SK-N-SH (cell line): ENCODE measurements at regions of chr6 and their contacts with region 1.

Region 1: DNA sequence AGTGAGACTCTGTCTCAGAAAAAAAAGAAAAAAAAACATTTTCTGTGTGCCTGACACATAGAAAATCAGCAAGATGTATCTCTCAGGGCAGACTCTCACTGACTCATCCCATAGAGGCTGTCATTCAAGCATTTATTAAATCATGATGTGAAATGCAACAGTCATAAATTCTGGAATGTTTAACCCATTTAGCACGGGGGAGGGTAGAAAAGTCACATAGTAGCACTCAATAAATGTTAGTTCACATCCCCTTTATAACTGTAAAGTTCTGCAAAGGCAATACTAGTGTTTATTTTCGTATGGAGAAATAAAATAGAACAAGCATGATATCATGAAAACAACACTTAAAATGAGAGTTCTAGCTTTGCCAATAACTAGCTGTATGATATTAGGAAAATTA is 15.5 kb upstream of the CARMIL1 start:
- DNase-seq: no peak
- H3K4me3 ChIP-seq: no peak overlapping the region
- H3K27ac ChIP-seq: peak overlapping the region in 1 of 2 experiments; percentile 85; a peak in 2 of 4 replicates
- H3K4me1 ChIP-seq: no peaks in the 10 kb centered on the region
- H3K27me3 ChIP-seq: no peaks in the 10 kb centered on the region
- CTCF ChIP-seq: no peak
- EP300 ChIP-seq: peak in 1 of 2 experiments; percentile 85; a peak in 2 of 4 replicates
- RAD21 ChIP-seq: no peak

Region 2: GRCh38 chr6:25193460-25194171 is 70.0 kb before region 1 on chr6:
- CTCF ChIA-PET with region 1: no interaction called
- POLR2A ChIA-PET with region 1: no interaction called
- DNase-seq: no peak
- H3K4me3 ChIP-seq: peak overlapping the region in 1 of 2 experiments; percentile 47; a peak in 3 of 4 replicates
- H3K27ac ChIP-seq: peak overlapping the region; percentile 95 to 100
- H3K4me1 ChIP-seq: peaks cover 7 to 29% of the 10 kb centered on the region in 2 experiments
- H3K27me3 ChIP-seq: no peaks in the 10 kb centered on the region
- CTCF ChIP-seq: no peak
- EP300 ChIP-seq: peak in 1 of 2 experiments; percentile 83; a peak in 2 of 4 replicates
- RAD21 ChIP-seq: no peak

Region 3: GRCh38 chr6:25223490-25223991 is 40.1 kb before region 1 on chr6:
- CTCF ChIA-PET with region 1: interaction called, 21 read pairs
- POLR2A ChIA-PET with region 1: interaction called, 4 read pairs
- DNase-seq: peak; percentile 64
- H3K4me3 ChIP-seq: peak overlapping the region; percentile 21 to 39
- H3K27ac ChIP-seq: peak overlapping the region in 1 of 2 experiments; percentile 39; a peak in 1 of 4 replicates
- H3K4me1 ChIP-seq: peaks cover 3 to 29% of the 10 kb centered on the region in 2 experiments; a peak in 3 of 4 replicates
- H3K27me3 ChIP-seq: no peaks in the 10 kb centered on the region
- CTCF ChIP-seq: peak; percentile 99
- EP300 ChIP-seq: no peak
- RAD21 ChIP-seq: peak; percentile 95

Region 4: DNA sequence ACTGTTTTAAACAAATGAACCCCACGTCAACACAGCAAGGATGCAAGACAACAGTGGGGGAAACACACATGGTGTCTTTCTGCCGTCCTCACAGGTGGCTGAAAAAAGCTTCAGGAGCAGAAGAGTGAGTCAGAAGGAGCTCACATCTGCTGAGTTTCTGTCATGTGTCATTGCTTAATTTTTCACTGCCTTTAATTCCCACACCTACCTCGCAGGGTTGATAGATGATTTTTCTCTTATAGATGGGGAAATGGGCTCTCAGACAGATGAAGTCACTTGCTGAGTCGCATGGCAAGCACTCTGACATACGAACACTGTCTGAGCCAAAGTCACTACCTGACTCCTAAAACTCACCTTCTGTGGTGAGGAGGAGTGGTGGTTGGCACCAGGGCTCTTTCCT is 12.8 kb before region 1 on chr6:
- CTCF ChIA-PET with region 1: interaction called, 37 read pairs
- POLR2A ChIA-PET with region 1: no interaction called
- DNase-seq: no peak
- H3K4me3 ChIP-seq: no peak overlapping the region
- H3K27ac ChIP-seq: peak overlapping the region in 1 of 2 experiments; percentile 20; a peak in 2 of 4 replicates
- H3K4me1 ChIP-seq: peaks cover 0 to 9% of the 10 kb centered on the region in 2 experiments; a peak in 1 of 4 replicates
- H3K27me3 ChIP-seq: no peaks in the 10 kb centered on the region
- CTCF ChIP-seq: no peak
- EP300 ChIP-seq: no peak; a peak in 1 of 4 replicates
- RAD21 ChIP-seq: no peak

Region 5: DNA sequence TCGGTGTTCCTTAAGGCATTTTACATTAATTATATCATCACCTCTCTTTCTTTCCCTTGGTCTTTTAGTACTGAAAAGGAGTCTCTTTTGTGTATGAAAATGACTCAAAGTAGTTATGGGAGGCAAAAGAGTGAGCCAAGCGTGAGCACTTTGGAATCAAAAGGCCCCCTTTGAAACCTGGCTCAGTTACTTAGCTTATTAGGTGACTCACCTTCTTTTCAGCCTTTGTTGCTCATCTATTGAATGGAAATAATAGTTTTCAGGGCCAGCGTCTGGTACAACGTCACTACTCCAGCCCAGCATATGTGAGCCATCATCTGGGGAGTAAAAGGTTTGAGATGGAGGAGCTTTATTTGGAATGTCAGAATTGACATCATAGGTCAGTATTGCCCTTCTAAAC is 241.0 kb after region 1 on chr6:
- CTCF ChIA-PET with region 1: interaction called, 10 read pairs
- POLR2A ChIA-PET with region 1: no interaction called
- DNase-seq: no peak
- H3K4me3 ChIP-seq: no peak overlapping the region
- H3K27ac ChIP-seq: no peak overlapping the region
- H3K4me1 ChIP-seq: peaks cover 0 to 2% of the 10 kb centered on the region in 2 experiments; a peak in 3 of 4 replicates
- H3K27me3 ChIP-seq: no peaks in the 10 kb centered on the region
- CTCF ChIP-seq: no peak
- EP300 ChIP-seq: no peak
- RAD21 ChIP-seq: no peak

Region 6: DNA sequence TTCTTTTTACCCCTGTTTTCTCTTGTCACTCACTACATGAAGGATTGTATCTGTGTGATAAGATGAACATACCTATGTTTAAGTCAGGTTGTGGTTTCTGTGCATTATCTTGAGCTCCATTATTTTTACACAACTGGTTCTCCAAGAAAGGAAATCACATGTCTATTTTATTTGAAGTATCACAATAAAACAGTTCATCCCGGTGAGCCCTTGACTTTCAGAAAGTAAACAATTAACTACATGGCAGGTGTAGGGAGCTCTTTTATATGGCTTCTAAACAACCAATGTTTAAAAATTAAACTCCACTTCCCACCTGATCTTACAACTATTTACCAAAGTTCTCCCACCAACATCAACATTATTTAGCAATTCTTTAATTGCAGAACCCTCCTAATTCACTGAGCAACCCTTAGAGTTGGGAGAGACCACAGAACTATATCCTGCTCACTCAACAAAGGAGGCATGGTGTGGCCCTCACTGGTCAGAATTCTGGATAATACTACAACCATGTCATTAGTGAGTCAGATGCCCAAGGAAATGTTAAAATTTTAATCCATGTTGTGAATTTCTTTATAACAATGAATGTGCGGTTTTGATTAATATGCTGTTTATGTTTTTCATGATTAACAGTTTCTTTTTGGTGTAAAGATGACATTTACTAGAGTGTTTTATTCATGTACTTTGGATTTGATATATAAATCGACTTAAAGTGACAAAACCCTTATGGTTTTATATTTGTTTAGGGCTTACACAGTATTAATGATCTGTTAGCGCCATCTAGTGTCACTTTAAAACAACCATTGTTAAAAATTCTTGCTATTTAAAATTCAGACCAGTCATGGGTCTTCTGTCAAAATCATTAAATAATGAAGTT is 338.4 kb after region 1 on chr6:
- CTCF ChIA-PET with region 1: interaction called, 17 read pairs
- POLR2A ChIA-PET with region 1: no interaction called
- DNase-seq: peak; percentile 49
- H3K4me3 ChIP-seq: no peak overlapping the region; a peak in 1 of 4 replicates
- H3K27ac ChIP-seq: no peak overlapping the region
- H3K4me1 ChIP-seq: no peaks in the 10 kb centered on the region; a peak in 1 of 4 replicates
- H3K27me3 ChIP-seq: no peaks in the 10 kb centered on the region
- CTCF ChIP-seq: peak; percentile 80
- EP300 ChIP-seq: no peak
- RAD21 ChIP-seq: peak; percentile 85

Region 7: GRCh38 chr6:25942561-25943147 is 679.0 kb after region 1 on chr6:
- CTCF ChIA-PET with region 1: interaction called, 10 read pairs
- POLR2A ChIA-PET with region 1: no interaction called
- DNase-seq: peak; percentile 25
- H3K4me3 ChIP-seq: no peak overlapping the region
- H3K27ac ChIP-seq: no peak overlapping the region
- H3K4me1 ChIP-seq: no peaks in the 10 kb centered on the region
- H3K27me3 ChIP-seq: no peaks in the 10 kb centered on the region
- CTCF ChIP-seq: peak; percentile 56
- EP300 ChIP-seq: no peak
- RAD21 ChIP-seq: peak; percentile 93